H1 (cell line): ENCODE measurements at regions of chr1 and their contacts with region 1.

Region 1: GRCh38 chr1:207997486-207998268 is 86.8 kb upstream of the CD34 start:
- DNase-seq: peak in 1 of 2 experiments; percentile 72
- H3K4me3 ChIP-seq: no peak overlapping the region
- H3K27ac ChIP-seq: no peak overlapping the region
- H3K4me1 ChIP-seq: peaks cover 0 to 9% (median 6%) of the 10 kb centered on the region in 4 experiments; a peak in 6 of 7 replicates
- H3K27me3 ChIP-seq: no peaks in the 10 kb centered on the region
- CTCF ChIP-seq: peak; percentile 80 to 92 (median 87)
- EP300 ChIP-seq: no peak
- POLR2A ChIP-seq: no peak
- RAD21 ChIP-seq: peak; percentile 47 to 59

Region 2: DNA sequence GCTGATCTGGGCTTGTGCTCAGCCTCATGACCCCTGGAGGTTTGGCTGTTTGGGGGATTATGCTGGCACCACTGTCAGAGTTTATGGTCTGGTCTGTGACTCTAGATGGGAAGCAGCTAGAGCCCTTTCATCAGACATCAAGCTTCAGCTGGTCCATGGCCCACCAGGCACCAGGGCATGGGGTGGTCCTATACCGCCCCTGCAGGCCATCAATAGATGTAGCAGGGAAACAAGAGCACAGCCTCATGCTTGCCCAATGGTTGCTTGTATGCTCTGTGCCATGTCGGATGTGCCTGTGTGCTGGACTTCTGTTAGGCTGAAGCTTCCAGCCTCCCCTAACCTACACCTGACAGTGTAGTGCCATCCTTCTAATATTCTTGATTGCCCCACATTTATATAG is 15.7 kb before region 1 on chr1:
- CTCF ChIA-PET with region 1: interaction called, 12 read pairs
- POLR2A ChIA-PET with region 1: no interaction called
- DNase-seq: peak in 1 of 2 experiments; percentile 52
- H3K4me3 ChIP-seq: no peak overlapping the region
- H3K27ac ChIP-seq: no peak overlapping the region
- H3K4me1 ChIP-seq: no peaks in the 10 kb centered on the region
- H3K27me3 ChIP-seq: no peaks in the 10 kb centered on the region
- CTCF ChIP-seq: peak; percentile 80 to 94 (median 93)
- EP300 ChIP-seq: no peak
- POLR2A ChIP-seq: no peak
- RAD21 ChIP-seq: peak; percentile 76 to 82

Region 3: GRCh38 chr1:208019257-208019656 is 21.6 kb after region 1 on chr1:
- CTCF ChIA-PET with region 1: interaction called, 40 read pairs
- POLR2A ChIA-PET with region 1: no interaction called
- DNase-seq: no peak
- H3K4me3 ChIP-seq: no peak overlapping the region
- H3K27ac ChIP-seq: no peak overlapping the region
- H3K4me1 ChIP-seq: 0 out of 7 replicates have a peak, but pooled peaks cover 0 to 2% (median 0%) of the 10 kb centered on the region in 4 experiments
- H3K27me3 ChIP-seq: no peaks in the 10 kb centered on the region
- CTCF ChIP-seq: no peak
- EP300 ChIP-seq: no peak
- POLR2A ChIP-seq: no peak
- RAD21 ChIP-seq: no peak

Region 4: GRCh38 chr1:208036109-208036808 is 38.6 kb after region 1 on chr1:
- CTCF ChIA-PET with region 1: interaction called, 10 read pairs
- POLR2A ChIA-PET with region 1: no interaction called
- DNase-seq: no peak
- H3K4me3 ChIP-seq: no peak overlapping the region
- H3K27ac ChIP-seq: no peak overlapping the region
- H3K4me1 ChIP-seq: peaks cover 0 to 3% (median 0%) of the 10 kb centered on the region in 4 experiments; a peak in 1 of 7 replicates
- H3K27me3 ChIP-seq: no peaks in the 10 kb centered on the region
- CTCF ChIP-seq: peak; percentile 34 to 69 (median 55)
- EP300 ChIP-seq: no peak
- POLR2A ChIP-seq: no peak
- RAD21 ChIP-seq: peak; percentile 60 to 68

Region 5: GRCh38 chr1:208238710-208239472 is 241.2 kb after region 1 on chr1:
- CTCF ChIA-PET with region 1: interaction called, 31 read pairs
- POLR2A ChIA-PET with region 1: no interaction called
- DNase-seq: no peak
- H3K4me3 ChIP-seq: no peak overlapping the region; a peak in 1 of 8 replicates
- H3K27ac ChIP-seq: no peak overlapping the region
- H3K4me1 ChIP-seq: peaks cover 6 to 17% (median 11%) of the 10 kb centered on the region in 4 experiments
- H3K27me3 ChIP-seq: peaks cover 16 to 33% (median 28%) of the 10 kb centered on the region in 4 experiments
- CTCF ChIP-seq: peak; percentile 48 to 65 (median 59)
- EP300 ChIP-seq: no peak
- POLR2A ChIP-seq: no peak
- RAD21 ChIP-seq: peak; percentile 53 to 63